Activated T-helper 1 cell treated with anti-CD3 and anti-CD28 coated beads, Interleukin-12 subunit alpha, Interleukin-12 subunit beta, Interleukin-2, Interleukin-4 antibody, amounts not matched to agents 30 ng/mL and 10 ng/mL and 1 ng/mL, durations not matched to agents 14 hours and 24 hours and 36 hours (primary cell): ENCODE measurements at regions of chr20 and their contacts with region 1.

Region 1: GRCh38 chr20:52972190-52972937 is at the start of gene TSHZ2:
- DNase-seq: peak; percentile 41
- H3K4me3 Mint-ChIP-seq: peak within 1 kb of the TSS; percentile 99
- H3K27ac Mint-ChIP-seq: peak within 1 kb of the TSS; percentile 99
- H3K4me1 Mint-ChIP-seq: peaks cover 48% of the 10 kb centered on the region
- H3K27me3 Mint-ChIP-seq: peaks cover 6% of the 10 kb centered on the region
- total RNA-seq, gene TSHZ2: 26.0 and 27.5 TPM in 2 replicates

Region 2: GRCh38 chr20:51412333-51412871 is 1560.0 kb before region 1 on chr20:
- intact Hi-C with region 1: no loop called
- DNase-seq: no peak
- H3K4me3 Mint-ChIP-seq: no peak overlapping the region
- H3K27ac Mint-ChIP-seq: peak overlapping the region; percentile 56
- H3K4me1 Mint-ChIP-seq: peaks cover 82% of the 10 kb centered on the region
- H3K27me3 Mint-ChIP-seq: no peaks in the 10 kb centered on the region

Region 3: GRCh38 chr20:52312132-52312729 is 660.1 kb before region 1 on chr20:
- intact Hi-C with region 1: loop called (anchors 2 kb)
- DNase-seq: peak; percentile 20
- H3K4me3 Mint-ChIP-seq: no peak overlapping the region
- H3K27ac Mint-ChIP-seq: no peak overlapping the region
- H3K4me1 Mint-ChIP-seq: no peaks in the 10 kb centered on the region
- H3K27me3 Mint-ChIP-seq: no peaks in the 10 kb centered on the region

Region 4: DNA sequence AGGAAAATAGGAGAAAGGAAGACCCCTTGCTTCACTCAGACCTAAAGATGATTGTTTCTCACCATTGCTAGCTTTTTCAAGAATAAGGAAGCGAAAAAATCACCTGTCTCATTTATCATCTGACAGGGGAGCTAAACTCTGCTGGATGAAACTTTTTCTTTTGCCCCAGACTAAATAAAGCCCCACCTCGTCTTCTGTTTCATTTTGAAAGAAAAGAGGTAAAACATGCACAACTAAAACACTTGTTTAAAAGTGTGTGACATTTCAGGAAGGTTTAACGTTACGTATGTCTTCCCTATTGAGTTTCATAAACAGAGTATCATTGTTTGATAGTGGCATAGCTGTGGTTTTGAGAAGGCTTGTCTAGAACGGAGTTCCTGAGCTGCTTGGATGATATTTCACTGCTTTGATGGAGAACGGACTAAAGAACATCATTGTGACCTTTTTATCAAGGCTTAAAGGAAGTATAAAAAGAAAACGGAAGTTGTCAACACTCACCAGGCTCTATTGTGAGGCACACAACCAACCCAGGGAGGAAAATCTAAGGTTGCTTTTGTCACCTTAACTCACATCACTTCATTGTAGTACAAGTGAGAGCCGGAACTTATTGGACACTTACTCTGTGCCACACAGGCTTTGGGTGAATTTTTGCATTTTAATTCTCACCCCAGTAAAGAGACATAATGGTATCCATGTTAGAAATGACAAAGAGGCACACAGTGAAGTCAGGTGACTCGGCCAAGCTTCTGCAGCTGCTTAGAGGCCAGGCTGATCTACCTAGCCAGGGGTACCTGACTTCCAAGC is 29.3 kb after region 1 on chr20:
- intact Hi-C with region 1: loop called (anchors 1 kb)
- DNase-seq: no peak
- H3K4me3 Mint-ChIP-seq: peak overlapping the region; percentile 79
- H3K27ac Mint-ChIP-seq: peak overlapping the region; percentile 98
- H3K4me1 Mint-ChIP-seq: peaks cover 59% of the 10 kb centered on the region
- H3K27me3 Mint-ChIP-seq: no peaks in the 10 kb centered on the region

Region 5: DNA sequence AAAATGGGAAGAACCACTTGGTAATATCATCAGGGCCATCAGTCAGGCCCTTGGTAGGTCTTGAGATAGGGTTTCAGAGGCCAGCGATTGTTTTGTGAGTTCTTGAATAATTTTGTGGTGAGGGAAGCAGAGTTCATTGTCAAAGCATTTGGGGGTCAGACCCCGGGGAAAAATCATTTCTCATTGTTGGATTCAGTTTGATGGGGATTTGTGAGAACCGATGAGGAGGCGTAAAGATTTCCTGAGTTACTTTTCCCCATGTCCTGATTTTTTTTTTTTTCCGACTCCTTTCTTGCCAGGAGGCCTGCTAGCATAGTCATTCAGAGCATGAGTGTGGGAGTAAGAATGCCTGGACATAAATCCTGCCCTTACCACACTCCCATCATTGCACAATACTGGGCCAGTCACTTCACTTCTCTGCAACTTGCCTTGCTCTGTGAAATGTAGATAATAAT is 60.1 kb after region 1 on chr20:
- intact Hi-C with region 1: loop called (anchors 1 kb)
- DNase-seq: no peak
- H3K4me3 Mint-ChIP-seq: no peak overlapping the region
- H3K27ac Mint-ChIP-seq: no peak overlapping the region
- H3K4me1 Mint-ChIP-seq: peaks cover 63% of the 10 kb centered on the region
- H3K27me3 Mint-ChIP-seq: no peaks in the 10 kb centered on the region

Region 6: DNA sequence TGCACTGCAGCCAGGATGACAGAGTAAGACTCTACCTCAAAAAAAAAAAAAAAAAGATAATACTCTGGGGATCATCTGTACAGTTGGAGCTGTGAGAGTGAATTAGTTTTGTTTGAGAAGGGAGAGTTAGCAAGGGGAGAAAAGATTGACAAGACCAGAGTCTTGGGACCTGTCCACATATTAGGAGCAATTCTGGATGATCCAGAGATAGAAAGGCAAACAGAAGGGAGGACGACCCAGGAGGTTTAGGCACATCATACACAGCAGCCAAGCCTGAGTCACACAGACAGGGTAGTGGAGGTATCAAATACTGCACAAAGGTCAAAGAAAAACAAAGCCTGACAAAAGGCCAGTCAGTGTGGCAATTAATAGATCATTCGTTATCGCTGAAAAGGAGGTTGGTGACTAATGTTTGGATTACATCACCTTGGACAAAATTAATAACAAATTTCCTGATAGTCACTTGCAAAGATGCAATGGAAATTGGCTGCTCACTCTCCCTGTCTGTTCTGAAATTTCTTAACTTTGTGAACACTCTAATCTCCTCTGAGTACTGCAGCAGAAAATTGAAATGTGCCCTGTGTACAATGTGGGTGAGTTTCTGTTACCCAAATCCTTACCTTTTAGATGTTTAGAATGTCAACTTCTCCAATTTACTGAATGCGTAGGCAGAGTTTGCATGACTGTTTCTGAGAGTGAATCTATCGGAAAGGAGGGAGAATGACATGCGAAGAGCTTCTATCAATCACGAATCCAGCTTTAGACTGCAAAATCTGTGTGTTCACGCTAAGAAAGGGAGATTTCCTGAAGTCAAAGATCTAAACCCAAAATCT is 105.2 kb after region 1 on chr20:
- intact Hi-C with region 1: loop called (anchors 1 kb)
- DNase-seq: no peak
- H3K4me3 Mint-ChIP-seq: no peak overlapping the region
- H3K27ac Mint-ChIP-seq: no peak overlapping the region
- H3K4me1 Mint-ChIP-seq: peaks cover 19% of the 10 kb centered on the region
- H3K27me3 Mint-ChIP-seq: no peaks in the 10 kb centered on the region

Region 7: GRCh38 chr20:53149148-53149889 is 177.0 kb after region 1 on chr20:
- intact Hi-C with region 1: loop called (anchors 1 kb)
- DNase-seq: no peak
- H3K4me3 Mint-ChIP-seq: peak overlapping the region; percentile 45
- H3K27ac Mint-ChIP-seq: peak overlapping the region; percentile 75
- H3K4me1 Mint-ChIP-seq: peaks cover 64% of the 10 kb centered on the region
- H3K27me3 Mint-ChIP-seq: no peaks in the 10 kb centered on the region

Region 8: GRCh38 chr20:53216856-53217576 is 244.7 kb after region 1 on chr20:
- intact Hi-C with region 1: loop called (anchors 2 kb)
- DNase-seq: peak; percentile 66
- H3K4me3 Mint-ChIP-seq: peak overlapping the region; percentile 51
- H3K27ac Mint-ChIP-seq: peak overlapping the region; percentile 59
- H3K4me1 Mint-ChIP-seq: peaks cover 53% of the 10 kb centered on the region
- H3K27me3 Mint-ChIP-seq: no peaks in the 10 kb centered on the region